Colonic mucosa (tissue), 4 donors: ENCODE measurements at regions of chr1 and their contacts with region 1.

Region 1: DNA sequence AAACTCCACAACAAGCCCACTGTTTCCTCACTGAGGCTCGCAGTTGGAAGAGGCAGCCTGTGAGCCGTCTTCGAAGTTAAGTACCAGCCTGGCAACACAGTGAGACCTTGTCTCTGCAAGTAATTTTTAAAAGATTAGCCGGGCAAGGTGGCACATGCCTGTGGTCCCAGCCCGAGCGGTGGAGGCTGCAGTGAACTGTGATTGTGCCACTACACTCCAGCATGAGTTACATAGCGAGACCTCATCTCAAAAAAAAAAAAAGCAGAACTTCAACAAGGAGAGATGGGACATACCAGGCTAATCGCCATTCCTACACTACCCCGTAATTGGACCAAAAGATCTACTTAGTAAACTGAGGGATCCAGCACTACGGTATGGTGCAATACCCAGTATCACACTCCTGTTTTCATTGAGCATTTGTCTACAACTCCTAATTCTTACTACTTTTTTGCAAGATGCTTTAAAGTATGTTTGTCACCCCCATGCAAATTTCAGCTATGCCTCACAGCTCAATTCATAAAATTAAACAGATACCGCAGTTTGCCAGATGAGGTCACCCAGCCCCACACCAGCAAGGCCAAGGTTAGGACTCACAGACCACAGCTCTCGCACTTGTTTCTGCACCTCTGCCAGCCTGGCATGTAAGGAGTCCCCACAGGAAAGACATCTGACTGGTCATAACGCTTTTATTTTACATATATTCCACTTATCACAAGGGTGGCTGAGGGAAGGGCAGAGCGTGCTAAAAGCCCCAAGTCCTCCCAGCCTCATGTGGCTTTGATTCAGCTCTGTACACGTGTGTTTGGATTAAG is 21.0 kb downstream of the SDE2 start:
- DNase-seq: no peak
- H3K4me3 ChIP-seq: no peak overlapping the region
- H3K27ac ChIP-seq: no peak overlapping the region
- H3K4me1 ChIP-seq: peaks cover 5% of the 10 kb centered on the region
- H3K27me3 ChIP-seq: no peaks in the 10 kb centered on the region
- CTCF ChIP-seq: no peak

Region 2: GRCh38 chr1:225318706-225319575 is 659.2 kb before region 1 on chr1:
- intact Hi-C with region 1: loop called (anchors 10 kb)
- DNase-seq: peak; percentile 59
- H3K4me3 ChIP-seq: no peak overlapping the region
- H3K27ac ChIP-seq: no peak overlapping the region
- H3K4me1 ChIP-seq: no peaks in the 10 kb centered on the region
- H3K27me3 ChIP-seq: no peaks in the 10 kb centered on the region
- CTCF ChIP-seq: peak; percentile 56

Region 3: DNA sequence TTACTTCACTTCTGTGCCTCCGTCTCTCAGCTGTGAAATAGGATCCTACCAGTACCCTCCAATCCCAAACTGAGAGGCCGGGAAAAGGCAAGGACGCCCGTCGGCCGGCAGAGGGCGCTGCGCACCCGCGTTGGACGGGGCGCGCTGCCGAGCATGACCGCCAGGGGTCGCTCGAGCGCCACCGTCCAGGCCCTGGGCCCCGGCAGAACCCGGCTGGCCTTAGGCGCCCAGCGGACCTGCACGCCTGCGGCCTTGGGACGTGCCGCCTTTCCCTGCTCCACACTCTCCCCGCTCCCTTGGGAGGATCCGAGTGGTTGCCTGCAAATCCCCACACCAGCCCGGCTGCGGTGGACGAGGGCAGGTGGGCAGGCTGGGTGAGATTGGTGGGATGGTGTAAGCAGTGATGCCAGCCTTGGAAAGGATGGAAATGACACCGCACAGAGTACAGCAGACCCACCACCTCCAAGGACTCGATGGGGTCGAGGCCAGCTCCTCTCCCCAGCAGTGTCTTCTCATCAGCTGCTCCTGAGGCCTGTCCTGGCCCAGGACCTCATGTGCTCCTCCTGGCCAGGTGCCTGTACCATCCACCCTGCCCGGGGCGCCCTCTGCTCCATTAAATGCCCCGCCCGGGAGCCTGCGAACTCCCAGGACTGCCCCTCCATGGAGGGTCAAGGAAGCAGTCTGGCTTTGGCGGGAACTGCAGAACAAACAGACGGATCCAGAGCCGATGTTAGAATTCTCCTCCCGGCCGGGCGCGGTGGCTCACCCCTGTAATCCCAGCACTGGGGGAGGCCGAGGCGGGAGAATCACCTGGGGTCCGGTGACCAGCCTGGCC is 502.9 kb before region 1 on chr1:
- intact Hi-C with region 1: loop called (anchors 5 kb)
- DNase-seq: peak; percentile 58
- H3K4me3 ChIP-seq: no peak overlapping the region
- H3K27ac ChIP-seq: no peak overlapping the region
- H3K4me1 ChIP-seq: no peaks in the 10 kb centered on the region
- H3K27me3 ChIP-seq: no peaks in the 10 kb centered on the region
- CTCF ChIP-seq: peak; percentile 100

Region 4: GRCh38 chr1:226320930-226321329 is 342.8 kb after region 1 on chr1:
- intact Hi-C with region 1: no loop called
- DNase-seq: no peak
- H3K4me3 ChIP-seq: no peak overlapping the region
- H3K27ac ChIP-seq: no peak overlapping the region
- H3K4me1 ChIP-seq: no peaks in the 10 kb centered on the region
- H3K27me3 ChIP-seq: no peaks in the 10 kb centered on the region
- CTCF ChIP-seq: no peak